ENCODE measurements at regions of chr4 and their contacts with region 1.

Region 1: DNA sequence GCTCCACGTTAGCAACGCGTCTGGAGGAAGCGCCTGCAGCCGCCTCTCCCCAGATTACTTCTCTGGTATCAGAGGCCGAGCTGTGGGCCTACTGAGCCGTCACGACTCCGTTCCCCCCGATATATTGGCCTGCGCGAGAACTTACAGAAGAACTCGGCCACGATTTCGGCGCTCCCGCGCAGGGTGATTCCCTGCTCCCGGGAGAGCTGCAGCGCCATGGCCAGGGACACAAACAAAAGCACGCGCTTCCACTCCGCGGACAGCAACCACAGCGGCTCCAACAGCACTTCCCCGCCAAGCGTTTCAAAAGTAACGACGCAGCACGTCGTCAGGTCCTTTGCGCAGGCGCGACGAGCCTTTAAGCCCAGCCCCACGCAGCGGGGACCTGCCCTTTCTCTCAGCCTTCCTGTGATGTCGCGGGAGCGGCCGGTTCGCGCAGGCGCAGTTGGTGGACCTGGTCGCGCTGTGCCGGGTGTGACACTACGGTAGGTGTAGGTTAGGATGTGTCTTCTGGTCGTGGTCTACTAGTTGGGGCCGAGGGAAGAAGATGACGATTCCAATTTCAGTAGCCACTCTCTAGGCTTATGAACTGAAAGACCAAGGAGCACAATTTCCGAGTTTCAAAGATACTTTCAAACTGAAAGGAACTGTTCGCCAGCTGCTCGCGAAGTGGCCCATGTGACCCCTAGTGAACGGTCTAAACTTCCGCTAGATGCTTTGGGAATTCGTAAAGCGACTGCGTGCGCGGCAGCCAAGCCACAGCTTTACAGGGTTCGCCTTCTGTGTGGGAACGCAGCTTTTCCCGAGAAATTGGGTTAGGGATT is at the start of gene MAD2L1:
- DNase-seq: peak; percentile 99
- H3K4me3 Mint-ChIP-seq: peak within 1 kb of the TSS; percentile 94
- H3K27ac Mint-ChIP-seq: peak within 1 kb of the TSS; percentile 96
- H3K4me1 Mint-ChIP-seq: peaks cover 53% of the 10 kb centered on the region
- H3K27me3 Mint-ChIP-seq: no peaks in the 10 kb centered on the region
- CTCF ChIP-seq: no peak
- total RNA-seq, gene MAD2L1: 16.2 and 26.8 TPM in 2 replicates

Region 2: DNA sequence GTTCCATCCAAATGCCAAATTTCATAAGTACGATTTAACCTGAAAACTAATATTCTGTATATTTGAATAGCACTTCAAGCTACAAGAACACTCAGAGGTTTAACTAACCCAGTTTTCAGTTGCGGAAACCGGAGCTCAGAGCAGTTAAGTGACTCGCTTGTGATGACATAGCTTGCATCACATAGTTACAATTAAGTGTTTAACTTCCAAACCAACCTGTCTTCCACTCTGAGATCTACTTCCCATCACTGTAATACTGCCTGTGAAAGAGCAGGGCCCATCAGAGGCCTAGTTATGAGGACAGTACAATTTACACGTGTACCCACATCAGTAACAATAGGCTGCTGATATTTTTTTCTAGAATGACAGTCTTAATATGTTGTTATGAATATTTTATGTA is 120.4 kb before region 1 on chr4:
- CTCF ChIA-PET with region 1: no interaction called
- POLR2A ChIA-PET with region 1: no interaction called
- intact Hi-C with region 1: no loop called
- DNase-seq: peak; percentile 5
- H3K4me3 Mint-ChIP-seq: no peak overlapping the region
- H3K27ac Mint-ChIP-seq: no peak overlapping the region
- H3K4me1 Mint-ChIP-seq: no peaks in the 10 kb centered on the region
- H3K27me3 Mint-ChIP-seq: no peaks in the 10 kb centered on the region
- CTCF ChIP-seq: no peak

Region 3: GRCh38 chr4:120056246-120056645 is 10.5 kb before region 1 on chr4:
- CTCF ChIA-PET with region 1: interaction called, 14 read pairs
- POLR2A ChIA-PET with region 1: interaction called, 7 read pairs
- intact Hi-C with region 1: no loop called
- DNase-seq: no peak
- H3K4me3 Mint-ChIP-seq: no peak overlapping the region
- H3K27ac Mint-ChIP-seq: no peak overlapping the region
- H3K4me1 Mint-ChIP-seq: peaks cover 8% of the 10 kb centered on the region
- H3K27me3 Mint-ChIP-seq: no peaks in the 10 kb centered on the region
- CTCF ChIP-seq: peak; percentile 7

Region 4: DNA sequence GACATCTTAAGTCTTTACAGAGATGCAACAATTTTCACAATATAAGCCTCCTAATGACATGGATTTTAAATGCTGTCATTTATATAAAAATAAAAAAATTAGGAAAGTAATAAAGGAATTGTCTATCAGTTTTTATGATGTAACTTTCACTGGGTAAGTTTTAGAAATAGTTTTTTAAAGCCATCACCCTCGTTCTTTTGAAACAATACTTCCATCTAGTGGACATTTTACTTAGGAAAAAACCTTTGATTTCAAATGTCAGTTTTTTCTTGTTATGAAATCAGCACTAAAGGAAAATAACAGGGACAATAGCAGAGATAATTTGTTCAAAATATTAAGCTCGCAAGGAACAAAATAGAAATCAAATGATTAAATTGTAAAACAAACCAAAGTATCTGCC is 1029.9 kb after region 1 on chr4:
- CTCF ChIA-PET with region 1: interaction called, 4 read pairs
- POLR2A ChIA-PET with region 1: interaction called, 3 read pairs
- intact Hi-C with region 1: loop called (anchors 1 kb)
- DNase-seq: peak; percentile 36
- H3K4me3 Mint-ChIP-seq: no peak overlapping the region
- H3K27ac Mint-ChIP-seq: no peak overlapping the region
- H3K4me1 Mint-ChIP-seq: no peaks in the 10 kb centered on the region
- H3K27me3 Mint-ChIP-seq: no peaks in the 10 kb centered on the region
- CTCF ChIP-seq: peak; percentile 34

Region 5: DNA sequence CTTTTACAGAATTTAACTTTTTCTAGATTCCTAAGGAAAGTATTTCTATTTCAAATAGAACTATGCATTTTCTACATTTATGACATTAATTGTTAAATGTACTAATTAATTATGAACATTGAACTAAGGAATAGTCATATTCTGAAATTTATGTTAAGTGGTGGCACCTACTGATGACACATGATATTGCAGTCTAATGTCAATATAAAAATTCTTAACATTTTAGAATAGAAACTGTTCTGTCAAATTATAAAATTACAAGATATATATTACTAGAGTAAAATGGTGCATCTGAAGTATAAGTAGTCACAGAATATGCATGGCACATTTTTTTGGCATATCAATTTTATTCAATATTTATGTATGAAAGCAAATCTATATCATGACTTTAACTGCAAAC is 1045.8 kb after region 1 on chr4:
- CTCF ChIA-PET with region 1: interaction called, 3 read pairs
- POLR2A ChIA-PET with region 1: no interaction called
- intact Hi-C with region 1: loop called (anchors 5 kb)
- DNase-seq: peak; percentile 8
- H3K4me3 Mint-ChIP-seq: no peak overlapping the region
- H3K27ac Mint-ChIP-seq: no peak overlapping the region
- H3K4me1 Mint-ChIP-seq: no peaks in the 10 kb centered on the region
- H3K27me3 Mint-ChIP-seq: no peaks in the 10 kb centered on the region
- CTCF ChIP-seq: no peak